ENCODE measurements at regions of chr10 and their contacts with region 1.

Region 1: DNA sequence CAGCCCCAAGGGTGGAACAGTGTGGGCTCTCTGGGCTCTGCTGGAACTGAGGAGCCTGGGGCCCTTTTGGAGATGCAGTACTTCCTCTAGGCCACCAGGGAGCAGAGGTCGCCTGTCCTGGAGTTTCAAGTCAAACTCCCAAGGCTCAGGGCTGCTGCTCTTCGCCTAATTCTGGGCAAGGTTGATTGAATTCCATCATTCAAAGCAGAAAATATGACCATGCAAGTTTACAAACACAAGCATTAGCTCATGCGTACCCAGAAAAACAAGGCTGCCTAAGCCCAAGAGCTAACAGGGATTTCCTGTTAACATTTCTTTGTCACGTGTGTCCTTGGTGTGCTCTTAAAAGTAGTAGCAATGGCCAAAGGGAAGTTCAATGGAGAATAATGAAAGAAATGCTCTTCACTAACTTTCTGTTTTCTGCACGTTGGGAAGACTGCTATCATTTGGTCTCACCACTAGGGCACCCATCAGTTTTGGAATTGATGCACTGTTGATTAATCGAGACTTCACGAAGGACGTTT is 20.1 kb downstream of the LDB3 start:
- DNase-seq: peak; percentile 85
- CTCF ChIP-seq: peak; percentile 82

Region 2: GRCh38 chr10:86960003-86960862 is 271.8 kb after region 1 on chr10:
- CTCF ChIA-PET with region 1: interaction called, 18 read pairs
- POLR2A ChIA-PET with region 1: no interaction called
- DNase-seq: peak; percentile 86
- CTCF ChIP-seq: peak; percentile 83